ENCODE measurements at regions of chr12 and their contacts with region 1.

Region 1: DNA sequence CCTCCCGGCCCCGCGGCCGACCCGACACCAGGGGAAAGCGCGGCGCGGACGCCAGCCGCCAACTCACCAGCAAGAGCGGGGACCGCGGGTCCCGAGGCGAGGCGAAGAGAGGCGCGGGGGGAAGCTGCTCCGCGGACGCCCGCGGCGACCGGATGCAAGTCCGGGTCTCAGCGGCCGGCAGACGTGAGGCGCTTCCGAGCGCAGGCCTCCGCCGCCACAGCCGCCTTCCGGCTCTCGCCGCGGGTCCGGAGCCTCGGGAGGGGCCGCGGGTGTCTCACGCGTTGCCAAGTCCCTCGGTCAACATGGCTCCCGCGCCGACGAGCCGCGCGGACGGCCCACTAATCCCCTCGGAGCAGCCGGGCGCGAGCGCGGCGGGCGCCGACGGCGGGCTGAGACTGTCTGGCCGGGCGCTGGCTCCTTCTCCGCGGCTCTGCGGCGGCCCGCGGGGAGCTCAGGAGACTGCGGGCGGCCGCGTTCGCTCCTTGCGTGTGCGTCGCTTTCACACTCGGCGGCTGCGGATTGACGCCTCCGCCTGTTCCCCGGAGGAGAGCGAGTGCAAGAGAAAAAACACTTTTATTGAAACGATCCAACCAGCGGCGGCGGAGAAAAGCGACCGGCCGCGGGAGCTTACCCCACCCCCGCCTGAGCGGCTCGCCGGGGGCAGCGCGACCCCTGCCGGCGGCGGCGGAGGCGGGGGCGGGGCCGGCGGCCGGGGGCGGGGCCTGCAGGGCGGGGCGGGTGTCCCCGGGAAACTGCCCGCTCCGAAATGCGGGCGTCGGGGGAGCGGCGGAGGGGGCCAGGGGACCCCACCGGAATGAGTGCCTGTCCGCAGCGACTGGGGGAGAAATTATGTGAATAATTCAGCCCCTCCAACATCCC is at the start of gene CDK17:
- DNase-seq: peak; percentile 93
- ATAC-seq: peak; percentile 62
- H3K4me3 Mint-ChIP-seq: peak within 1 kb of the TSS; percentile 89
- H3K27ac Mint-ChIP-seq: peak within 1 kb of the TSS; percentile 98
- H3K4me1 Mint-ChIP-seq: peaks cover 35% of the 10 kb centered on the region
- H3K27me3 Mint-ChIP-seq: no peaks in the 10 kb centered on the region
- total RNA-seq, gene CDK17: 38.0 to 39.4 TPM

Region 2: GRCh38 chr12:95858479-95859343 is 541.4 kb before region 1 on chr12 and contains the start of gene SNRPF:
- CTCF ChIA-PET with region 1: no interaction called
- POLR2A ChIA-PET with region 1: no interaction called
- intact Hi-C with region 1: loop called in 1 of 2 experiments (anchors 2 kb)
- DNase-seq: peak; percentile 95
- ATAC-seq: peak; percentile 95
- H3K4me3 Mint-ChIP-seq: no peak within 1 kb of the TSS
- H3K27ac Mint-ChIP-seq: peak within 1 kb of the TSS; percentile 59
- H3K4me1 Mint-ChIP-seq: peaks cover 28% of the 10 kb centered on the region
- H3K27me3 Mint-ChIP-seq: peaks cover 3% of the 10 kb centered on the region
- total RNA-seq, gene SNRPF: 23.1 to 61.1 TPM

Region 3: DNA sequence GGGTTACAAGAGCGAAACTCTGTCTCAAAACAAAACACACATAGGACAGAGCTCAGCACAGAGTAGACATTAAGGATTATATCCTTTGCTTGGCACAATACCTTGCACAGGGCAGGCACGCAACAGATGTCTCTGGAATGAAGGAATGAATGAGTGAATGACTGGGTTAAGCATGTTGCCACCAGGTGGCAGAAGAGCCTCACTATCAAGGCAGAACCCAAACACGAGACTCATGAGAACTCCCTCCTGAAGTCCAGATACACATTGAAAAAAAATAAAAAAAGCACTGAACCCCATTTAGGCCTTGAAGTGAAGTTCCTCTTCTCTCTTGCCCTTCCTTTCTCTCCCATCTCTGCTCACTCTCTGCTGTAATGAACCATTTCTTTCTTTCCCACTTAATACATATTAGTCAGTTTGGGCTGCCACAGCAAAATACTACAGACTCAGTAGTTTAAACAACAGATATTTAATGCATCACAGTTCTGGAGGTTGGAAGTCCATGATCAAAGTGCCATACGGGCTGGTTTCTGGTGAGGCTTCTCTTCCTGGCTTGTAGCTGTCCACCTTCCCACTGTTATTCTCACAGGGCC is 338.2 kb before region 1 on chr12:
- CTCF ChIA-PET with region 1: interaction called, 3 read pairs
- POLR2A ChIA-PET with region 1: no interaction called
- intact Hi-C with region 1: loop called (anchors 1 to 2 kb)
- DNase-seq: peak; percentile 87
- ATAC-seq: peak; percentile 91
- H3K4me3 Mint-ChIP-seq: no peak overlapping the region
- H3K27ac Mint-ChIP-seq: peak overlapping the region; percentile 47
- H3K4me1 Mint-ChIP-seq: peaks cover 23% of the 10 kb centered on the region
- H3K27me3 Mint-ChIP-seq: no peaks in the 10 kb centered on the region

Region 4: GRCh38 chr12:96237465-96238077 is 162.6 kb before region 1 on chr12:
- CTCF ChIA-PET with region 1: interaction called, 7 read pairs
- POLR2A ChIA-PET with region 1: no interaction called
- intact Hi-C with region 1: loop called in 1 of 2 experiments (anchors 10 kb)
- DNase-seq: peak; percentile 72
- ATAC-seq: peak; percentile 54
- H3K4me3 Mint-ChIP-seq: peak overlapping the region; percentile 28
- H3K27ac Mint-ChIP-seq: peak overlapping the region; percentile 69
- H3K4me1 Mint-ChIP-seq: peaks cover 73% of the 10 kb centered on the region
- H3K27me3 Mint-ChIP-seq: no peaks in the 10 kb centered on the region

Region 5: DNA sequence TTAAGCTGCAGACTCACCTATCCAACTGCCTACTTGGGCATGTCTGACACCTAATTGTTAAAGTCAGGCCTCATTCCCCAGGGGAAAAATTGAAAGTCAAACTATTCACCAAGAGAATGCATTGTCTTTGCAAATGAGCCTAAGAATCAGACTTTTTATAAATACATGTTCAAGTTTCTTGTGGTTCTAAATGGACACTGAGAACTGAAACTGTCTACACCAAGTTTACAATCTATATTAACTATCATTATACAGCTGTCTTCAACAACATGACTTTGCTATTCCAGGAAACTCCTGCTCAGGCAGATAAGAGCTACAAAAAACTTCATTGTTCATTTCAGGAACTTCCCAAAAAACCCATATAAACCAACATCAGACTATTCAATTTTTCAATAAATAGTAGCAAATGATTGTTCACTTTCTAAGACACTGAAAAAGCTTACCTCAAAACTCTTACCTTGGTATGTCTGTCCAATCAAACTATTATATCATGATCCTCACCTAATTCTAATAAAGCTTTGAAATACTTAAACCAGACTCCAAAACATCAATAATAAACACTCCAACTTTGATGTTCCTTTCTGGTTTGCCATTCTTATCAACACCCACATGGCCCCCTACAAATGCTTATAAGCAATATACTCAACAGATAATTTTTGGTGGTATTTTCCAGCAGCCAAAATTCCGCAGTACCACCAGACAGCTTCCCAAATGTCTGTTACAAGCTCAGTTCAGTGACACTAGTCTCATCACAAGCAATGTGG is 24.1 kb before region 1 on chr12:
- CTCF ChIA-PET with region 1: interaction called, 24 read pairs
- POLR2A ChIA-PET with region 1: interaction called, 7 read pairs
- intact Hi-C with region 1: loop called (anchors 1 kb)
- DNase-seq: no peak
- ATAC-seq: no peak
- H3K4me3 Mint-ChIP-seq: no peak overlapping the region
- H3K27ac Mint-ChIP-seq: peak overlapping the region; percentile 79
- H3K4me1 Mint-ChIP-seq: peaks cover 82% of the 10 kb centered on the region
- H3K27me3 Mint-ChIP-seq: no peaks in the 10 kb centered on the region

Region 6: DNA sequence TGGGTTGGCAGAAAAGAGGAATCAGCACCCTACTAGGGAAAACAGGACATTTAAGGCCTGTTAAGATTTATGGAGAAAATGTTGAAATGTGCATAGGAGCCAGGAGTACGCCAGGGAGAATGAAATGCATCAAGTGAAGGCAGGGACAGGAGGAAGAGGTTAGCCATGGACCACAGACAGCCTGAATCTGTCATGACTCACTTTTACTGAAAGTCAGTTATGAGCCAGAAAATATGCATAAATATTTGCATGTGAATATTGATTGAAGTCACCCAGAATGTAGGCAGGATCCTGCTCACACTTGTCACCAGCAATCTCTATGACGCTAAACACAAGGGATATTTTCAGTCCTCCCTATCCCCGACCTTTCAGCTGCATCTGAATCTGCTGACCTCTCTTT is 25.2 kb after region 1 on chr12:
- CTCF ChIA-PET with region 1: interaction called, 4 read pairs
- POLR2A ChIA-PET with region 1: interaction called, 3 read pairs
- intact Hi-C with region 1: loop called in 1 of 2 experiments (anchors 1 kb)
- DNase-seq: peak; percentile 65
- ATAC-seq: peak; percentile 80
- H3K4me3 Mint-ChIP-seq: no peak overlapping the region
- H3K27ac Mint-ChIP-seq: peak overlapping the region; percentile 63
- H3K4me1 Mint-ChIP-seq: peaks cover 47% of the 10 kb centered on the region
- H3K27me3 Mint-ChIP-seq: peaks cover 2% of the 10 kb centered on the region

Region 7: DNA sequence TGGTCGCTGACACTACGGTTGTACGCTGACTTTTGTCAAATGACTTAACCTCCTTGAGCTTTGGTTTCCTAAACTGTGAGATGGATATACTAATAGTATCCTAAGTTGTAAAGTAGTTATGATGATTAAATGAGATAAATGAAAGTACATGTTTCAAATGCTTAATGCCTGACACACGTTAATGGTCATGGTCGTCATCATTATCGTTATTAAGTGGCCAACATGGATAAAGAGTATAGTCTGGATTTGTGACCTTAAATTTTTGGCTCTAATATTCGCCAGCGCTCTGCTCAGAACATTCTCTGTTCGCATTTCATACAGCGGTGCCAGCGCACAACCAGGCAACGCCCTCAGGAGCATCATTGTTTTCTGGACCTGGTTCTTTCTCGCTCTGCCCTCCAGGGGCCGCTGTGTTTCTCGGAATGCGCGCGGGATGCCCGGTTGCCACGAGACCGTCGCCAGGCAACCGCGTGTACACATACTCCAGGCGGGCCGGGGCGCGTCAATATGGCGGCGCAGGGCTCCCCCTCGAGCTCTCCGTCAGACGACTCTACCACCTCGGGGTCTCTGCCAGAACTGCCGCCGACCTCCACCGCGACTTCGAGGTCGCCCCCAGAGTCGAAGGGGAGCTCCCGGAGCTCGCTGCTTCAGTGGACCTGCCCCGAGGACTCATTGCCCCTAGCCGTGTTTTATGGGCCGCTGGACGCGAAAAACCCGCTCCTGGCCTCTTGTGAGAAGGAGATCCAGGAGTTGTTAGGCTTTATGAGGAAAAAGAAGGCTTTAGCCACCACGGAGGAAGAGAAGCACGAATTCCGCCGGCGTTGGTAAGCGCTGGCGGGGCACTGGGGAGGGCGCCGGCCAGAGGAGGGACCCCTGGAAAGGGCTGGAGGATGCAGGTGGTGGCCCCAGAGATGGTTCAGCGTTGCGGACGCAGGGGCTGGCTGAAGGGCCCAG is 89.2 kb after region 1 on chr12 and contains the start of gene CFAP54:
- CTCF ChIA-PET with region 1: interaction called, 10 read pairs
- POLR2A ChIA-PET with region 1: interaction called, 7 read pairs
- intact Hi-C with region 1: loop called (anchors 1 kb)
- DNase-seq: peak; percentile 97
- ATAC-seq: peak; percentile 86
- H3K4me3 Mint-ChIP-seq: peak within 1 kb of the TSS; percentile 80
- H3K27ac Mint-ChIP-seq: peak within 1 kb of the TSS; percentile 66
- H3K4me1 Mint-ChIP-seq: peaks cover 33% of the 10 kb centered on the region
- H3K27me3 Mint-ChIP-seq: no peaks in the 10 kb centered on the region
- total RNA-seq, gene CFAP54: 0.37 to 0.44 TPM

Measured in activated CD4-positive, alpha-beta T cell treated with anti-CD3 and anti-CD28 coated beads for 36 hours (primary cell).